ENCODE measurements at regions of chr1 and their contacts with region 1.

Region 1: GRCh38 chr1:236920286-236920894 is 83.9 kb downstream of the MT1HL1 start:
- DNase-seq: no peak
- H3K4me3 ChIP-seq: no peak overlapping the region
- H3K27ac ChIP-seq: no peak overlapping the region
- H3K4me1 ChIP-seq: no peaks in the 10 kb centered on the region
- H3K27me3 ChIP-seq: no peaks in the 10 kb centered on the region
- CTCF ChIP-seq: no peak
- POLR2A ChIP-seq: no peak

Region 2: GRCh38 chr1:236854602-236854978 is 65.8 kb before region 1 on chr1:
- intact Hi-C with region 1: no loop called
- DNase-seq: no peak
- H3K4me3 ChIP-seq: no peak overlapping the region
- H3K27ac ChIP-seq: no peak overlapping the region
- H3K4me1 ChIP-seq: no peaks in the 10 kb centered on the region
- H3K27me3 ChIP-seq: no peaks in the 10 kb centered on the region
- CTCF ChIP-seq: no peak
- POLR2A ChIP-seq: no peak

Region 3: GRCh38 chr1:236978740-236979139 is 58.4 kb after region 1 on chr1:
- intact Hi-C with region 1: loop called (anchors 5 kb)
- DNase-seq: no peak
- H3K4me3 ChIP-seq: no peak overlapping the region
- H3K27ac ChIP-seq: no peak overlapping the region
- H3K4me1 ChIP-seq: peaks cover 0 to under 1% of the 10 kb centered on the region in 2 donors
- H3K27me3 ChIP-seq: no peaks in the 10 kb centered on the region
- CTCF ChIP-seq: no peak
- POLR2A ChIP-seq: no peak

Region 4: GRCh38 chr1:237133921-237134320 is 213.5 kb after region 1 on chr1:
- intact Hi-C with region 1: no loop called
- DNase-seq: peak; percentile 38 to 64
- H3K4me3 ChIP-seq: no peak overlapping the region
- H3K27ac ChIP-seq: no peak overlapping the region
- H3K4me1 ChIP-seq: no peaks in the 10 kb centered on the region
- H3K27me3 ChIP-seq: no peaks in the 10 kb centered on the region
- CTCF ChIP-seq: no peak
- POLR2A ChIP-seq: no peak

Measured in thyroid gland (tissue), 4 donors.